Sigmoid colon (tissue), 7 donors: ENCODE measurements at regions of chr19 and their contacts with region 1.

Region 1: GRCh38 chr19:13277104-13277809 is 127.0 kb downstream of the IER2 start:
- DNase-seq: no peak
- H3K4me3 ChIP-seq: no peak overlapping the region
- H3K27ac ChIP-seq: no peak overlapping the region
- H3K4me1 ChIP-seq: no peaks in the 10 kb centered on the region
- H3K27me3 ChIP-seq: peaks cover 0 to 9% (median under 1%) of the 10 kb centered on the region in 3 donors
- CTCF ChIP-seq: peak; percentile 51 to 59 (median 56)
- EP300 ChIP-seq: no peak
- POLR2A ChIP-seq: no peak

Region 2: GRCh38 chr19:13718733-13719132 is 441.5 kb after region 1 on chr19:
- intact Hi-C with region 1: loop called (anchors 10 kb)
- DNase-seq: no peak
- H3K4me3 ChIP-seq: no peak overlapping the region
- H3K27ac ChIP-seq: no peak overlapping the region
- H3K4me1 ChIP-seq: no peaks in the 10 kb centered on the region
- H3K27me3 ChIP-seq: peaks cover 0 to 11% (median 0%) of the 10 kb centered on the region in 3 donors
- CTCF ChIP-seq: no peak
- EP300 ChIP-seq: no peak
- POLR2A ChIP-seq: no peak